ENCODE measurements at regions of chr6 and their contacts with region 1.

Region 1: DNA sequence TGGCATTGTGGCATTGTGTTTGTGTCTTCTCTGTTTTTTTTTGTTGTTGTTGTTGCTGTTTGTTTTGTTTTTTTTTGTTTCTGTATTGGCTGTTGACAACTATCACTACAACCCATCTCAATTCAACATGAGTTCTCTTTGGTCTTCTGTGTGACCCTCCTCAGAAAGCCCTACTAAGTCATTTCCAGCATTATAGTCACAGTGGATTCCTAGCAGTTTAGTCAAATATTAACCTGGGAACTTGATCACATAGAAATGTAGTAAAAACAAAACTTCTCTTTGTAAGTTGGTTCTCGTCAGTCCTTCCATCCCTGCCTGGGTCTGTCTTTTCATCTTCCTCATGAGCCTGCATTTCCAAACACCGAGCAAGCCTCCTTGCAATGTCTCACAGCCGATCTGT is 16.8 kb downstream of the SLC17A2 start:
- DNase-seq: peak; percentile 35
- H3K4me3 Mint-ChIP-seq: no peak overlapping the region
- H3K27ac Mint-ChIP-seq: peak overlapping the region; percentile 85
- H3K4me1 Mint-ChIP-seq: peaks cover 46% of the 10 kb centered on the region
- H3K27me3 Mint-ChIP-seq: peaks cover 2% of the 10 kb centered on the region

Region 2: DNA sequence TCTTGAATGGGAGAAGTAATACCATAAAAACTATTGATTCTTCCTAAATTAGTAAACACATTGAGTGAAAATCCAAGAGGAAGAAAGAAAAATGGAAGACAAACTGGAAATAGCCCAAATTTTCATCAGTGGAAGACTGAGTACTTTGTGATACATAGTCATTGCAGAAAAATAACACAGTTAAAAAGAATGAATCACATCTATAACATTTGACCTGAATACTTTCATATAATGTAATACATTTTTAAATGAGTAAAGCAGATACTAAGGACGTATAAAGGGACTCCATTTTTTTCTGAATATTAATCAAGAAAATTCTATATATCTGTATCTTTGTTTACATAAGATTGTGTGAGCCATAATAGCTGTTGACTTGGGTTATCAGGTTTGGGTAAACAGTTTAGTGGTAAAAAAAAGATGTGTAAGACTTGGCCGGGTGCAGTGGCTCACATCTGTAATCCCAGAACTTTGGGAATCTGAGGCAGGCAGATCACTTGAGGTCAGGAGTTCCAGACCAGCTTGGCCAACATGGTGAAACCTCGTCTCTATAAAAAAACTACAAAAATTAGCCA is 21.1 kb after region 1 on chr6:
- CTCF ChIA-PET with region 1: no interaction called
- intact Hi-C with region 1: loop called (anchors 2 kb)
- DNase-seq: no peak
- H3K4me3 Mint-ChIP-seq: no peak overlapping the region
- H3K27ac Mint-ChIP-seq: peak overlapping the region; percentile 32
- H3K4me1 Mint-ChIP-seq: peaks cover 7% of the 10 kb centered on the region
- H3K27me3 Mint-ChIP-seq: no peaks in the 10 kb centered on the region

Region 3: GRCh38 chr6:25962149-25963127 is 48.7 kb after region 1 on chr6 and contains the start of gene TRIM38:
- CTCF ChIA-PET with region 1: no interaction called
- intact Hi-C with region 1: loop called (anchors 1 kb)
- DNase-seq: peak; percentile 91
- H3K4me3 Mint-ChIP-seq: peak within 1 kb of the TSS; percentile 99
- H3K27ac Mint-ChIP-seq: peak within 1 kb of the TSS; percentile 99
- H3K4me1 Mint-ChIP-seq: peaks cover 76% of the 10 kb centered on the region
- H3K27me3 Mint-ChIP-seq: no peaks in the 10 kb centered on the region
- total RNA-seq, gene TRIM38: 19.1 to 19.7 TPM

Measured in activated naive CD4-positive, alpha-beta T cell treated with anti-CD3 and anti-CD28 coated beads for 36 hours (primary cell).